ENCODE measurements at regions of chr13 and their contacts with region 1.

Region 1: GRCh38 chr13:113374511-113375175 is 10.7 kb upstream of the GRTP1 start:
- DNase-seq: no peak
- ATAC-seq: no peak
- H3K4me3 ChIP-seq: no peak overlapping the region
- H3K27ac ChIP-seq: no peak overlapping the region
- H3K4me1 ChIP-seq: no peaks in the 10 kb centered on the region
- H3K27me3 ChIP-seq: no peaks in the 10 kb centered on the region
- CTCF ChIP-seq: no peak
- POLR2A ChIP-seq: no peak
- RAD21 ChIP-seq: no peak

Region 2: GRCh38 chr13:113275387-113275786 is 99.3 kb before region 1 on chr13:
- CTCF ChIA-PET with region 1: interaction called, 6 read pairs
- POLR2A ChIA-PET with region 1: no interaction called
- RAD21 ChIA-PET with region 1: interaction called in 1 of 2 experiments, 4 read pairs
- intact Hi-C with region 1: loop called (anchors 2 kb)
- DNase-seq: peak; percentile 59
- ATAC-seq: peak; percentile 96
- H3K4me3 ChIP-seq: no peak overlapping the region
- H3K27ac ChIP-seq: no peak overlapping the region
- H3K4me1 ChIP-seq: peaks cover 0 to 11% of the 10 kb centered on the region in 2 experiments; a peak in 2 of 4 replicates
- H3K27me3 ChIP-seq: no peaks in the 10 kb centered on the region
- CTCF ChIP-seq: peak; percentile 66 to 81 (median 70); a peak in 5 of 6 replicates
- POLR2A ChIP-seq: no peak
- RAD21 ChIP-seq: peak; percentile 76